WTC11 (cell line): ENCODE measurements at regions of chr17 and their contacts with region 1.

Region 1: DNA sequence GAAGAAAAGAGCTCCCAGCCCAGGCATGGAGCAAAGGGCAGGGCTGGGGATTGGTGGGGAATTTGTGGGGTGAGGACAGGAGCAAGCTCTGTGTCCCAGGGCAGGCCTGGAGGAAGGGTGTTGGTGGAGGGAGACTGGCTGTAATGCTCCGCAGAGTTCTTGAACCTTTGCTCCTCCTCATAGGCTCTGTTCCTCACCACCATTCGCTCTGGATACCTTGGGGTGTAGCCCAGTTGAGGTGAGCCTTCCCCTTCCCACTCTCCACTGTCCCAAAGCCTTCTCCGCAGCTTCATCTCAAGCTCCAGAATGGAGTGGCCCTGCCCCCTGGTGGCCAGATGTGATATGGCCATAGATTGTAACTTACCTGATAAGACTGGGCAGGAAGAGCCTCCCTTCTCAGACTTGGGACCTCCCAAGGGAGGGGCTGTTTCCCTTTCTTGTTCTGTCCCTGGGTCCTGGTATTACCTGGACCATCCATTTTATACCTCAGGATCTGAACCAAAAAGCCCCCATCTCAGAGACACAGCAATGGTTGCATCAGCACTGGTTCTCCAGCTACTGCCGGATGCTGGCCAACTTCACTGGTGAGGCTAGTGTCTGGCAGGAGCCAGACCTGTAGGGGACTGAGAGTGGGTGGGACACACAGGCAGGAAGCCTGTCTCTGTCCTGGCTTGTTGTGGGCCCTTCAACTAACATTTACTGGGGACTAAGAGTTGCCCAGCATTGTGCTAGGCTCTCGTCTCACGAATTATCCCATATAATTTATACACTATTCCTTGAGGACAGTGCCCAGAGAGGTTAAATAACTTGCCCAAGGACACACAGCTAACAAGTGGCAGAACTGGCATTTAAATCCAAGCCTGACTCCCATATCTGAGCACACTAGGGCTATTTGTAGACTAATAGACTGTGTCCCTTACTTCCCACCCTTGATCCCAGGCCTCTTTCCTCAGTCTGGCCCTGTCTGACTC is 19.1 kb upstream of the STAC2 start:
- DNase-seq: peak; percentile 98
- ATAC-seq: peak; percentile 92
- H3K4me3 Mint-ChIP-seq: no peak overlapping the region
- H3K27ac Mint-ChIP-seq: no peak overlapping the region
- H3K4me1 Mint-ChIP-seq: peaks cover 22% of the 10 kb centered on the region
- H3K27me3 Mint-ChIP-seq: no peaks in the 10 kb centered on the region; the same call in 1 of the 2 replicates
- CTCF ChIP-seq: peak; percentile 94

Region 2: GRCh38 chr17:39194089-39194984 is 50.5 kb before region 1 on chr17:
- CTCF ChIA-PET with region 1: interaction called, 26 read pairs
- POLR2A ChIA-PET with region 1: interaction called, 5 read pairs
- DNase-seq: peak; percentile 73
- ATAC-seq: peak; percentile 51
- H3K4me3 Mint-ChIP-seq: peak overlapping the region; percentile 66
- H3K27ac Mint-ChIP-seq: peak overlapping the region; percentile 57; the same call in 1 of the 2 replicates
- H3K4me1 Mint-ChIP-seq: peaks cover 36% of the 10 kb centered on the region
- H3K27me3 Mint-ChIP-seq: no peaks in the 10 kb centered on the region
- CTCF ChIP-seq: peak; percentile 12; the same call in 1 of the 2 replicates

Region 3: DNA sequence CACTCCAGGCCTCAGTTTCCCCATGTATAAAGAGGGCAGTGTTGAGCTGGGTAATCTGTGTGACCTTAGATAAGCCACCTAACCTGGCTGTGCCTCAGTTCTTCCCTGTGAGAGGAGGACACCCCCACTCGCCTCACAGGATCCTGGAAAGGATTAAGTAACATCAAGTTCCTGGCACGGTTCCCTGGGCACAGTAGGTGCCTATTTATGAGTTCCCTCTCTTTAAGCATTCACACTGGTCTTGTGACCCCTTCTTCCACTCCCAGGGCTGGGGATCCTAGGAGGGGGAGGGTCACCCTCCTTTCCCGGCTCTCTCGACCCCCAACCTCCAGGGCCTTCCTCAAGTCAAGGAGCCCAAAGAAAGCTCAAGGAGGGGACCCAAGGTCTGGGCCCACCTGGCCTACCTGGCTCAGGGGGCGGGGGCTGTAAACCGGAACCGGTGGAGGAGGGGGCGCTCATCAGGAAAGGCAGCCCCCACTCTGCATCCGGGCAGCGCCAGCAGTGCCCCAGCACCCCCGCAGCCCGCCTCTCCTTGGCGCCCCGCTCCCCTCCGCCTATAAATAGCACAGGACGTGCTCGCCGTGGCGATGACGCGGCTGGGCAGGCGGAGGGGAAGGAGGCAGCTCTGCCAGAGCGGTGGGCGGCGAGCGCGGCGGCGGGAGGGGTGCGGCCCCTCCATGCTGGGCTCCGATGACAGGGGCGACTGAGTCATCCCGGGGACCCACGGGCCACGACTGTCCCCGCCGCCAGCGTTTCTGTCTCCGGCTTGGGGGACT is 35.4 kb before region 1 on chr17:
- CTCF ChIA-PET with region 1: interaction called, 626 read pairs
- POLR2A ChIA-PET with region 1: interaction called, 6 read pairs
- DNase-seq: peak; percentile 61
- ATAC-seq: peak; percentile 8
- H3K4me3 Mint-ChIP-seq: peak overlapping the region; percentile 64
- H3K27ac Mint-ChIP-seq: no peak overlapping the region
- H3K4me1 Mint-ChIP-seq: peaks cover 47% of the 10 kb centered on the region
- H3K27me3 Mint-ChIP-seq: peaks cover 7% of the 10 kb centered on the region
- CTCF ChIP-seq: no peak

Region 4: GRCh38 chr17:39225959-39226683 is 18.8 kb before region 1 on chr17:
- CTCF ChIA-PET with region 1: interaction called, 59 read pairs
- POLR2A ChIA-PET with region 1: interaction called, 3 read pairs
- DNase-seq: peak; percentile 98
- ATAC-seq: peak; percentile 96
- H3K4me3 Mint-ChIP-seq: peak overlapping the region; percentile 56
- H3K27ac Mint-ChIP-seq: peak overlapping the region; percentile 26; the same call in 1 of the 2 replicates
- H3K4me1 Mint-ChIP-seq: peaks cover 11% of the 10 kb centered on the region
- H3K27me3 Mint-ChIP-seq: peaks cover 45% of the 10 kb centered on the region
- CTCF ChIP-seq: no peak

Region 5: DNA sequence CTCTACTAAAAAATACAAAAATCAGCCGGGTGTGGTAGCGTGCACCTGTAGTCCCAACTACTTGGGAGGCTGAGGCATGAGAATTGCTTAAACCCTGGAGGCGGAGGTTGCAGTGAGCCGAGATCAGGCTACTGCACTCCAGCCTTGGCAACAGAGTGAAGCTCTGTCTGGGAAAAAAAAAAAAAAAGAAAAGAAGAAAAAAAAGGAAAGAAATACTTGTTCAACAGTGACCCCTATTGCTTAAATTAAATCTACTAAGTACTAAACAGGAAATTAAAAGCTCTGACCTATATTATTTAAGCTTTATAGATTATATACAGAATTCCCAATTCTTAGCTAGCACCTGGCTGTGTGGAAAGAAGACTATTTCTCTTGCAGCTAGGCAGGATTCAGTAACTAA is 107.6 kb after region 1 on chr17:
- CTCF ChIA-PET with region 1: interaction called, 14 read pairs
- POLR2A ChIA-PET with region 1: no interaction called
- DNase-seq: no peak
- ATAC-seq: no peak
- H3K4me3 Mint-ChIP-seq: no peak overlapping the region
- H3K27ac Mint-ChIP-seq: no peak overlapping the region; the same call in 1 of the 2 replicates
- H3K4me1 Mint-ChIP-seq: no peaks in the 10 kb centered on the region
- H3K27me3 Mint-ChIP-seq: no peaks in the 10 kb centered on the region; the same call in 1 of the 2 replicates
- CTCF ChIP-seq: no peak